ENCODE measurements at regions of chr15 and their contacts with region 1.

Region 1: DNA sequence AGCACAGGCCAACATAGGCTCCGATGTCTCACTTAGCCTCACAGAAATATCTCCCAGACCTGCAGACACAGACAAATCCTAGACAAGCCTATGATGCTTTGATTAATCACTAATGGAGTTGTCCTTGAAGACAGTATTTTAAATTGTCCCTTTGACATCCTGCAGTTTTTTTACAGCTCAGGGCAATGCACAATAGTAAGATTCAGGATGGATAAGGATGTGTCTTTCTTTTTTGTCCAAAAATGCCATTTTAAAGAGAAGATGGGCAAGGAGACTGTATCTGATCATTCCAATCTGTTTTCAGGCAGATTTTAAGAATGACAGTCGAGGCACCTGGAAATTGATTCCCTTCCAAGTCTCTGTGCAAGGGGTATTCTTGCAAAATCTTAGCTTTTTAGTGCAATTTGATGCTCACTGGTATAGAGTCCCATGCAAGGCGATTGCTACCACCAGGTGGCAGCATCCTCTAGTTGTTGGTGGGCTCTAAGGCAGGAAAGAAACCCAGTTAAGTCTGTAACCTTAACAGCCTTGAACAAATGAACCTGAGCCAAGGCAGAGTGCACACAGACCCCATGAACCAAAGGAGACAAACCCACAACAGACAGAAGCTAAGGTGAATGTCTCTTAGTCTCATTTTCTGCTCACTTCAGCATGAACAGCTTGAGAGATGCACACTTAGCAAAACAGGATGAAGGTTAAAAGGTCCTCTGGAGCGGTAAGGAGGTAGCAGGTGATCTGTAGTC is 51.2 kb upstream of the MINAR1 start:
- DNase-seq: peak; percentile 44 to 89
- H3K4me3 ChIP-seq: no peak overlapping the region
- H3K27ac ChIP-seq: no peak overlapping the region
- H3K4me1 ChIP-seq: no peaks in the 10 kb centered on the region
- H3K27me3 ChIP-seq: no peaks in the 10 kb centered on the region
- CTCF ChIP-seq: peak; percentile 43 to 92 (median 85)
- EP300 ChIP-seq: no peak
- POLR2A ChIP-seq: no peak
- RAD21 ChIP-seq: peak; percentile 92 to 97

Region 2: GRCh38 chr15:79339564-79340314 is 41.2 kb before region 1 on chr15:
- CTCF ChIA-PET with region 1: interaction called, 31 read pairs
- POLR2A ChIA-PET with region 1: no interaction called
- DNase-seq: no peak
- H3K4me3 ChIP-seq: no peak overlapping the region
- H3K27ac ChIP-seq: no peak overlapping the region
- H3K4me1 ChIP-seq: no peaks in the 10 kb centered on the region
- H3K27me3 ChIP-seq: no peaks in the 10 kb centered on the region
- CTCF ChIP-seq: peak in 2 of 3 experiments; percentile 64 to 78; a peak in 2 of 4 replicates
- EP300 ChIP-seq: no peak
- POLR2A ChIP-seq: no peak
- RAD21 ChIP-seq: peak; percentile 82 to 86

Region 3: DNA sequence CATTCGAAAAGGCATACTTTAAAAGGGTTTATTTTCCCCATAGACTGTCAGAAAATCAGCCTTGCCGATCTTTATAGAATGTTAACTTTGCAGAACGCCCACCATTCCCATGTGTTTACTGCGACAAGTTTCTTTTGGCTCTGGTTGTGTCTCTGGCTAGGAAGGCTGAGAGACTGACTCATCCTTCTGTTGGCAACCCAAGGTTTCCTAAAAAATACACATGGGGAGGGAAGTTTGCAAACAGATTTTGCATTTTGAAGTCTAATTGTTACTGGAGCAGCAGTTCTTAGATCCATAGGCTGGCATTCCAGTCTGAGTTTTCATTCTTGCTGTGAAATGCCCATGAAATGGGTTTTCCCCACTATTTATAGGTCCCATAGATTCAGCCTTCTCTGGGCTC is 13.3 kb after region 1 on chr15:
- CTCF ChIA-PET with region 1: interaction called, 31 read pairs
- POLR2A ChIA-PET with region 1: no interaction called
- DNase-seq: no peak
- H3K4me3 ChIP-seq: no peak overlapping the region
- H3K27ac ChIP-seq: no peak overlapping the region
- H3K4me1 ChIP-seq: no peaks in the 10 kb centered on the region
- H3K27me3 ChIP-seq: no peaks in the 10 kb centered on the region
- CTCF ChIP-seq: no peak
- EP300 ChIP-seq: no peak
- POLR2A ChIP-seq: no peak
- RAD21 ChIP-seq: no peak

Region 4: GRCh38 chr15:79418693-79419279 is 37.9 kb after region 1 on chr15:
- CTCF ChIA-PET with region 1: interaction called, 13 read pairs
- POLR2A ChIA-PET with region 1: no interaction called
- DNase-seq: no peak
- H3K4me3 ChIP-seq: no peak overlapping the region
- H3K27ac ChIP-seq: no peak overlapping the region
- H3K4me1 ChIP-seq: peaks cover 3 to 5% (median 4%) of the 10 kb centered on the region in 4 experiments; a peak in 5 of 7 replicates
- H3K27me3 ChIP-seq: no peaks in the 10 kb centered on the region
- CTCF ChIP-seq: no peak
- EP300 ChIP-seq: no peak
- POLR2A ChIP-seq: no peak
- RAD21 ChIP-seq: no peak

Region 5: DNA sequence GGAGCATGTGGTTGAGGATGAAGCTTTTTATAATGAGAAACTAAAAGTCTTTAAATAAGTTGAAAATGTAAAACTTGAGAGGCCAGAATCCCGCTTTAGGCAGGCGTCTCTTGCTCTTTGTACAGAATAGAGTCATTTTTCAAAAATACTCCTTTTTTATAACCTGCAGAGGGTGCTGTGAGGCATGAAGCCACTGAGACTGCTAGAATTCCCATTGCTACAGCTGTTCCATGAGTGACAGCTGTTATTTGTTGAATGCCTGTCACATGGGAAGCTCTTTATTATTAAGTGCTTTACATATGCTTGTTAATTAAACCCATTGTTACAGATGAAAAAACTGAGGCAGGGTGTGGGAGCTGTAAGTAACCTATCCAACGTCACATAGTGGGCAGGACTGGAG is 69.7 kb after region 1 on chr15:
- CTCF ChIA-PET with region 1: interaction called, 51 read pairs
- POLR2A ChIA-PET with region 1: no interaction called
- DNase-seq: no peak
- H3K4me3 ChIP-seq: no peak overlapping the region
- H3K27ac ChIP-seq: no peak overlapping the region
- H3K4me1 ChIP-seq: peaks cover 0 to 10% (median 6%) of the 10 kb centered on the region in 4 experiments; a peak in 5 of 7 replicates
- H3K27me3 ChIP-seq: no peaks in the 10 kb centered on the region; a peak in 1 of 7 replicates
- CTCF ChIP-seq: peak in 2 of 3 experiments; percentile 37 to 47; a peak in 2 of 4 replicates
- EP300 ChIP-seq: no peak
- POLR2A ChIP-seq: no peak
- RAD21 ChIP-seq: peak; percentile 61

Region 6: DNA sequence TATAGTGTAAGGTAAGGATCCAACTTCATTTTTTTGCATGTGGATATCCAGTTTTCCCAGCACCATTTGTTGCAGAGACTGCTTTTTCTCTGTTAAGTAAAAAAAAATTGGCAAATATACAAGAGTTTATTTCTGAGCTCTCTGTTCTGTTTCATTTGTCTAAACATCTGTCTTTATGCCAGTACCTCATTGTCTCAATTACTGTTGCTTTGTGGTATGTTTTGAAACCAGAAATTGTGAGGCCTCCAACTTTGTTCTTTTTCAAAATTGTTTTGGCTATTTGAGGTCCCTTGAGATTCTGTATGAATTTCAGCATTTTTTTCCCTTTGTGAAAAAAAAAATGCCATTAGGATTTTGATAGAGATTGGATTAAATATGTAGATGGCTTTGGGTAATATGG is 201.7 kb after region 1 on chr15:
- CTCF ChIA-PET with region 1: interaction called, 12 read pairs
- POLR2A ChIA-PET with region 1: no interaction called
- DNase-seq: no peak
- H3K4me3 ChIP-seq: no peak overlapping the region
- H3K27ac ChIP-seq: no peak overlapping the region
- H3K4me1 ChIP-seq: no peaks in the 10 kb centered on the region
- H3K27me3 ChIP-seq: no peaks in the 10 kb centered on the region
- CTCF ChIP-seq: no peak
- EP300 ChIP-seq: no peak
- POLR2A ChIP-seq: no peak
- RAD21 ChIP-seq: no peak

Region 7: DNA sequence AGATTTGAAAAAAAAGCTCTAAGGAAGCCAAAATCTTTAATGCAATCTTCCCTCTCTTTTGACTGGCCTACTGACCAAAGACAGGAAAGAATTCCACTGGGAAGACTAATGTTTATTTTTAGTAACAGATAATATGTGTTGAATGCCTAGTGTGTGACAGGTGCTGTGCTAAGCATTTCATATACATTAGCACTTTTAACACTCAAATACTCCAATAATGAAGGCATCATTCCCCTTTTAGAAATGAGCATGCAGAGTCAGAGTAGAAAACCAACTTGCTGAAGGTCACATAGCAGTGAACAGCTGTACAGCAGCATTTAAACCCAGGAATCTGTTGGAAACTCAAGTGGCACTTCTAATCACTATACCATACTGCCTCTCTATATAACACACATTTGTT is 221.8 kb after region 1 on chr15:
- CTCF ChIA-PET with region 1: interaction called, 11 read pairs
- POLR2A ChIA-PET with region 1: no interaction called
- DNase-seq: no peak
- H3K4me3 ChIP-seq: no peak overlapping the region
- H3K27ac ChIP-seq: no peak overlapping the region
- H3K4me1 ChIP-seq: peaks cover 0 to 2% (median 0%) of the 10 kb centered on the region in 4 experiments; a peak in 1 of 7 replicates
- H3K27me3 ChIP-seq: peaks cover 0 to 3% (median 0%) of the 10 kb centered on the region in 4 experiments; a peak in 1 of 7 replicates
- CTCF ChIP-seq: no peak
- EP300 ChIP-seq: no peak
- POLR2A ChIP-seq: no peak
- RAD21 ChIP-seq: no peak